ENCODE measurements at regions of chr1 and their contacts with region 1.

Region 1: GRCh38 chr1:226642876-226643576 is 94.5 kb downstream of the STUM start:
- DNase-seq: peak; percentile 99
- H3K27ac ChIP-seq: peak overlapping the region; percentile 43
- CTCF ChIP-seq: no peak

Region 2: DNA sequence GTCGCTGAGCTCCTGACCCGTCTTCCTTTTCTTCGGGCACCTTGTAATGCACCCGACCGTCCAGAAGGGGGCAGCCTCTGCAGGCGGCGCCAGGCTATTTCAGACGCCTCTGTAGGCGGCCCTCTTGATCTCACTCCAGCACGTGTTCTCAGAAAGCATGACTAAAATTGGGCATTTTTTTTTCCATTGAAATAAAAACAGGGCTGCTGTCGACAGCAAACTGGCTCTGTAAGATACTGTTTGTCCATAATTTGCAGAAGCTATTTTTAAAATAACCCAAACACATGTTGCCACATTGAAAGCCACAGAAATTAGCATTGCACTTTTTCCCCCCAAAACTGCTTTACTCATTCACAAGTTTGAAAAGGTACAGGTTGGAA is 16.5 kb before region 1 on chr1:
- CTCF ChIA-PET with region 1: interaction called, 29 read pairs
- POLR2A ChIA-PET with region 1: no interaction called
- DNase-seq: peak; percentile 72
- H3K27ac ChIP-seq: no peak overlapping the region
- CTCF ChIP-seq: peak; percentile 91

Region 3: DNA sequence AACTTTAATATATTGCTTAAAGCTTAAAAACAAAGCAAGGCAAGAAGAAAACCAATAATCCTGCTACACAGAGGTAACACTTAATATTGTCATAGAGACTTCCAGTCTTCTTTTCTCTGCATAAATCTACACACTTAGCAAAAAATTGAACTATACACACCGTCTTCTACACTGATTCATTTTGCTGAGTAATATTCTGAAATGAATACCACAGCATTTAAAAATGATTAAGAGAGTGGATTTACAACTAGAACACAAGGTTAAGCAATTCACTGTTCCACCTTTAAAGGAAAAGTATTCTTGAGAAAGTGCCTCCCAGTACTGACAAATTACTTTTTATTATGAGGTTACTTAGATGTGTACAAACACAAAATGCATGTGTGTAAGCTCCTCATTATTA is 118.3 kb after region 1 on chr1:
- CTCF ChIA-PET with region 1: no interaction called
- POLR2A ChIA-PET with region 1: no interaction called
- DNase-seq: no peak
- H3K27ac ChIP-seq: no peak overlapping the region
- CTCF ChIP-seq: no peak

Region 4: DNA sequence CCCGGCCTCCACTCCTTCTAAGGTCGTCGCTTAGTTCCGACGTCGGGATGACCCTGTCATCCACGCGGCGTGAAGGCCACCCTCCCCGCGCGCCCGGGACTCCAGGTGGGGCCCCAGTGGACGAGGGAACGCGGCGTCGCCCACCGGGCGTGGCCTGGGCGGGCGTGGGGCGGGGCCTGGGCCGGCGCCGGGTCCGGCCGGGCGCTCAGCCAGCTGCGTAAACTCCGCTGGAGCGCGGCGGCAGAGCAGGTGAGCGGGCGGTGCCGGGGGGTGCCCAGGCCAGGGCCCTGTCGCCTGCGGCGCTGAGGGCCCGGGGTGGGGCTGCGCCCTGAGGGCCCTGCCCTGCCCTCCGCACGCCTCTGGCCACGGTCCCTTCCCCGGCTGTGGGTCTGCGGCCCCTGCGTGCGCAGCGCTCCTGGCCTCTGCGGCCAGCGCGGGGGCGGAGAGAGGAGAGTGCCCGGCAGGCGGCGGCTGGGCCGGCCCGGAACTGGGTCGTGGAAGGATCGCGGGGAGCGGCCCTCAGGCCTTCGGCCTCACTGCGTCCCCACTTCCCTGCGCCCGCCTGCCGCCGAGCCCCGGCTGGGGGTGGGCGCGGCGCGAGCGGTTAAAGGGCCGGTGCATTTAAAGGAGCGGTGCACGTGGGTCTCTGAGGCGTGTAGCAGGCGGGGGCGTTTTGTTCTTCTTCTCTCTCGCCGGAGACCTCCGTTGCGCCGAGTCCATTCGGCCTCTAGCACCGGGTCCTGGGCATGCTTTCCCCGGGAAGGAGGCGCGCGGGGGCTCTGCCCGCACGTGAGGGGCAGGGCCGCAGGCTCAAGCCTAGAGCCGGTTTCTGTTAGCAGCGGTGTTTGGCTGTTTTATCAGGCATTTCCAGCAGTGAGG is 227.6 kb after region 1 on chr1 and contains the start of gene PSEN2:
- CTCF ChIA-PET with region 1: interaction called, 11 read pairs
- POLR2A ChIA-PET with region 1: no interaction called
- DNase-seq: peak; percentile 72
- H3K27ac ChIP-seq: peak within 1 kb of the TSS; percentile 50; the same call in 1 of the 2 replicates
- CTCF ChIP-seq: 0 out of 2 replicates have a peak, but pooled peaks have one; percentile 9

Measured in RWPE1 (cell line).